Mammary epithelial cell (primary cell): ENCODE measurements at regions of chr1 and their contacts with region 1.

Region 1: GRCh38 chr1:155323798-155324610 is 3.3 kb downstream of the RUSC1 start:
- DNase-seq: peak; percentile 97
- H3K4me3 ChIP-seq: peak overlapping the region; percentile 70 to 84 (median 72)
- H3K27ac ChIP-seq: peak overlapping the region; percentile 55
- H3K4me1 ChIP-seq: peaks cover 24% of the 10 kb centered on the region
- H3K27me3 ChIP-seq: no peaks in the 10 kb centered on the region
- CTCF ChIP-seq: no peak

Region 2: DNA sequence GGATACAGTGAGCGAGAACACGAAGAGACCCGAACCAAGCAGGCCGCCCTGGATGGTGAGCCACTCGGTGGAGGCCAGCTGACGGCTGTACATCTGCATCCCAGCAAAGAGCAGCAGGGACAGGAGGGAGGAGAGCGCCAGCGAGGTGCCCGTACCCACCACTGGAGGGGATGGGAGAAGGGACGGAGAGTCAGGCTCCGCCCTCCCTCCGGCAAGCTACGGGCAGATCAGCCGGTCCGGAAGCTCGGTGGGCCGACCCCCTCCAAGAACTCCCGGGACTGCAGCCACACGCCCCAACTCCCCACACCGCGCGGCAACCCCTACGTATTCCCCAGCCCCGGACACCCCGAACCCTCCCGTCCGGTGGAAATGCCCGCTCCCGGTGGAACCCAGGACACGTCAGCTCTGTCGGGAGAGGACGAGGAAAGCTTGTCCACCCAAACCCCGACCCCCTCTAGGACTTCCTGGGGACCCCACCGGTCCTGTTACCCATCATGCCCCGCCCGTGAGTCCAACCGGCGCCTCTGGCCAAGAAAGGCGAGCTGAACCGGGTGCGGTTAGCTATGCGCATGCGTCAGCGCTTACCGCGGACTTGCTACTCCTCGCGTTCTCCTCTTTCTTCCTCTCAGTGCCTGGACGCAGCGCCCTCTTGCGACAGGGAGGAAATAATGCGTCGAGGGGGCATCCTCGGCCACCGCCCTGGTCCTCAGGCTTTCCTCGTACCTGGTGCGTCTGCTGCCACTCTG is 151.1 kb before region 1 on chr1 and contains the start of gene KRTCAP2:
- CTCF ChIA-PET with region 1: no interaction called
- dilution Hi-C with region 1: no loop called
- in situ Hi-C with region 1: no loop called
- intact Hi-C with region 1: loop called (anchors 1 kb)
- DNase-seq: peak; percentile 91
- H3K4me3 ChIP-seq: peak within 1 kb of the TSS; percentile 77 to 97 (median 96)
- H3K27ac ChIP-seq: peak within 1 kb of the TSS; percentile 63
- H3K4me1 ChIP-seq: peaks cover 15% of the 10 kb centered on the region
- H3K27me3 ChIP-seq: no peaks in the 10 kb centered on the region
- CTCF ChIP-seq: peak; percentile 90 to 97
- total RNA-seq, gene KRTCAP2: 62.7 to 177 TPM

Region 3: DNA sequence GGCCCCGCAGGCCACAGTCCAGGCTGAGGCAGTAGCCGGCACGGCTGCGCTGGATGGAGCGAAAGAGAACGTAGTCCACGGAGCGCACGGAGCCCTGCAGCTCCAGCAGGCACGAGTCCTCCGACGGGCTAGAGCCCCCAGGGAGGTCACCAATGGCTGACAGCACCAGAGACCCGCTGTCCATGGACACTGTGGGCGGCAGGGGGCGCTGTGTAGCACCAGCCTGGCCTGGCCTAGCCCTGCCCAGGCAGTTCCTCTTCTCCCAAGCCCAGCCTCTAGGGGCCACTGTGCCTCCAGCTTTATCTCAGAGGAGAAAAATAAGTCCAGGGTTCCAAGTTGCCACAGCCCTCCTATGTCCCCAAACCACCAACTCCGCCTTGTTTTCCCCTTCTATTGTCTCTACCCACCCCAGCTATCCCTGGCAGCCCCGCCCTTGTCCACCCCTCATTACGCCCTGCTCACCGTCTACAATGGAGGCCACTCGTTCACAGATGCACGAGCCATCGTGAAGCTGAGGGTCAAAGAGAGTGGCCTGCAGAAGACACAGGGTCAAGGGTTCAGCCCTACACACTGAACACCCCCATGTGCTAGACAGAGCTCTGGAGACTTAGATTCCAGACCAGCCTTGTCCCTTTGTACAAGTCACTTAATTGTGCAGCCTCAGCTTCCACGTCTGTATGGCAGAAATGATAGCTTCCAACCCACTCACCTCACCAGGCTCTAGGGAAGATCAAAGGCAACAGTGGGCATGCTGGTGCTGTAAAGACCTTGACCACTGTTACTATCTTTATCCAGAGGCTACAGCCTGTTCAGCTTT is 73.2 kb before region 1 on chr1:
- CTCF ChIA-PET with region 1: no interaction called
- dilution Hi-C with region 1: no loop called
- in situ Hi-C with region 1: no loop called
- intact Hi-C with region 1: loop called (anchors 1 kb)
- DNase-seq: peak; percentile 73
- H3K4me3 ChIP-seq: peak overlapping the region in 1 of 3 experiments; percentile 21
- H3K27ac ChIP-seq: no peak overlapping the region
- H3K4me1 ChIP-seq: peaks cover 30% of the 10 kb centered on the region
- H3K27me3 ChIP-seq: no peaks in the 10 kb centered on the region
- CTCF ChIP-seq: peak; percentile 100

Region 4: GRCh38 chr1:155287987-155288543 is 35.9 kb before region 1 on chr1:
- CTCF ChIA-PET with region 1: no interaction called
- dilution Hi-C with region 1: loop called (anchors 5 kb)
- in situ Hi-C with region 1: no loop called
- intact Hi-C with region 1: no loop called
- DNase-seq: no peak
- H3K4me3 ChIP-seq: no peak overlapping the region
- H3K27ac ChIP-seq: no peak overlapping the region
- H3K4me1 ChIP-seq: no peaks in the 10 kb centered on the region
- H3K27me3 ChIP-seq: no peaks in the 10 kb centered on the region
- CTCF ChIP-seq: no peak

Region 5: GRCh38 chr1:155504207-155504606 is 180.2 kb after region 1 on chr1:
- CTCF ChIA-PET with region 1: no interaction called
- dilution Hi-C with region 1: no loop called
- in situ Hi-C with region 1: no loop called
- intact Hi-C with region 1: loop called (anchors 1 kb)
- DNase-seq: peak; percentile 16
- H3K4me3 ChIP-seq: no peak overlapping the region
- H3K27ac ChIP-seq: no peak overlapping the region
- H3K4me1 ChIP-seq: no peaks in the 10 kb centered on the region
- H3K27me3 ChIP-seq: no peaks in the 10 kb centered on the region
- CTCF ChIP-seq: peak; percentile 37 to 57

Region 6: GRCh38 chr1:155591770-155592169 is 267.8 kb after region 1 on chr1:
- CTCF ChIA-PET with region 1: no interaction called
- dilution Hi-C with region 1: no loop called
- in situ Hi-C with region 1: no loop called
- intact Hi-C with region 1: loop called (anchors 5 kb)
- DNase-seq: peak; percentile 33
- H3K4me3 ChIP-seq: no peak overlapping the region
- H3K27ac ChIP-seq: no peak overlapping the region
- H3K4me1 ChIP-seq: no peaks in the 10 kb centered on the region
- H3K27me3 ChIP-seq: no peaks in the 10 kb centered on the region
- CTCF ChIP-seq: peak; percentile 43 to 50